Activated CD4-positive, alpha-beta T cell treated with anti-CD3 and anti-CD28 coated beads for 36 hours (primary cell): ENCODE measurements at regions of chr22 and their contacts with region 1.

Region 1: GRCh38 chr22:40950962-40951794 is at the start of gene RBX1:
- DNase-seq: peak; percentile 99
- ATAC-seq: peak; percentile 83
- H3K4me3 Mint-ChIP-seq: peak within 1 kb of the TSS; percentile 100
- H3K27ac Mint-ChIP-seq: peak within 1 kb of the TSS; percentile 100
- H3K4me1 Mint-ChIP-seq: peaks cover 23% of the 10 kb centered on the region
- H3K27me3 Mint-ChIP-seq: no peaks in the 10 kb centered on the region
- total RNA-seq, gene RBX1: 49.9 to 96.6 TPM

Region 2: DNA sequence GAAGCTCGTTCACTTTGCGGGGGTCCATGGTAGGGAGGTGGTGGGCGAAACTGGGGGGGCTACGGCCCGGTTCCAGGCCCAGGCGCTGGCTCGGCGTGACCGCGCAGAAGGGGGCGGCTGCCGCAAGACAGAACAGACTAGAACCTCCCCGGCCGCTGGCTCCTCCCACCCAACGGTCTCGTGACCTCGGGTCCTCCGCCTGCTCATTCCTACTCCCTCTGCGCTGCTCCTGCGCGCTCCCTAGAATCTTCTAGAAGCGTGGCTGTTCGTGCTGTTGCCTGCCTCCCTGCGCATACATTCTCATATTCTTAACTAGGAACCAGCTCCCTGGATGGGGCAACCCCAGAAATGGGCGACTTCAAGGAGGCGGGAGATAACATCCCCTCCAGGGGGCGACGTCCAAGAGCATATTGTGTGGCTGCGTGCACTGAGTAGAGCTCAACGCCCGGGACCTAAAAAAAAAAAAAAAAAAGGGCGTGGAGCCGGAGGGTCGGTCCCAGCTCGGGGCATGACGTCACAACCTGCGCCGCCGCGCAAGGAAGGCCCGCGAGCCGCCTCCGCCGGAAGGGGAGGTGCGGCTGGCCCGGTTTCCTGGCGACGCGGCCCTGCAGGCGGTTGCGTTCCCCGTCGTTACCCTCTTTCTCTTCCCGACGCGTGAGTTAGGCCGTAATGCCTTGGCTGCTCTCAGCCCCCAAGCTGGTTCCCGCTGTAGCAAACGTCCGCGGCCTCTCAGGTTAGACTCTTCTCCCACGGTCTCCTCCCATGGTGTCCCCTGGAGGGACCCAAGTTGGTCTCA is 94.5 kb before region 1 on chr22 and contains the starts of genes ST13 and XPNPEP3:
- CTCF ChIA-PET with region 1: interaction called, 3 read pairs
- POLR2A ChIA-PET with region 1: no interaction called
- intact Hi-C with region 1: loop called (anchors 1 to 2 kb)
- DNase-seq: peak; percentile 98
- ATAC-seq: peak; percentile 96
- H3K4me3 Mint-ChIP-seq: peak within 1 kb of the TSS; percentile 97
- H3K27ac Mint-ChIP-seq: peak within 1 kb of the TSS; percentile 99
- H3K4me1 Mint-ChIP-seq: peaks cover 53% of the 10 kb centered on the region
- H3K27me3 Mint-ChIP-seq: no peaks in the 10 kb centered on the region
- total RNA-seq, gene ST13: 260 to 297 TPM
- total RNA-seq, gene XPNPEP3: 21.5 to 25.8 TPM

Region 3: GRCh38 chr22:41091132-41092022 is 140.2 kb after region 1 on chr22:
- CTCF ChIA-PET with region 1: interaction called, 4 read pairs
- POLR2A ChIA-PET with region 1: interaction called, 23 read pairs
- intact Hi-C with region 1: loop called (anchors 1 kb)
- DNase-seq: peak; percentile 100
- ATAC-seq: peak; percentile 90
- H3K4me3 Mint-ChIP-seq: peak overlapping the region; percentile 97
- H3K27ac Mint-ChIP-seq: peak overlapping the region; percentile 99
- H3K4me1 Mint-ChIP-seq: peaks cover 25% of the 10 kb centered on the region
- H3K27me3 Mint-ChIP-seq: no peaks in the 10 kb centered on the region

Region 4: DNA sequence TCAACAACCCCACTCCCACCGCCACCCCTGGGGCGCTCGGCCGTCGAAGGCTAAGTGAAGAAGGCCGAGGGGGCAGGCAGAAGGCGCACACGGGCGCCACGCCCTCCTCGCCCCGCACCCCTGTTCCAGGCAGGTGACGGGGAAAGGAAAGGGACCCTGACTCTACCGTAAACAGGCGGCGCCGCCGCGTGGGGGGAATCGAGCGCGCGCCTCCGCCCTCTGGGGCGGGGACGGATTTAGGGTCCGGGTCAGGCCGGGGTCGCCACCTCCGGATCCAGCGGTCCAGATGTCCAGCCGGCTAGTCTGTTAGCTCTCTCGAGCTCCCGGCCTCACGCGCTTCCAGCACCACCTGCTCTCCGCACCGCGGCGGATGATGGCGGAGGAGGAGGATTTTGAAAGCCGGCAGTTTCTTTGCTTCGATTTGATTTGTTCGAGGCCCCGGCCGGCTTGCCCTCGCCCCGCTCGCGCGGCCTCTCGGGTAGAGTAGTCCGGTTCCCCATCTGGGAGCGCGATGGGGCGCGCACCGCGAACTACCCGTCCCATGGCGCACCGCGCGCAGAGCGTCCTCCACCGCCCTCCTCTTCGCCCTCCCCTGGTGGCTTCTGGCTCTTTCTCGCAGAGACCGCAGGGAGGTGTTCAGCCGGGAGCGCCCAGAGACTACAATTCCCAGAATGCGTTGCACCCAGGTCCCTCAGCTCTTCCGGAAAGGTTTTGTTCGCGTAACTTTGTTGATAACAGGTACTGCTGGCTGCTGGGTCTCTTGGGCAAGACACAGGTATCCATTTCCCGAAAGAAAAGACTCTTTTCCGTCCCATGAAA is 334.9 kb after region 1 on chr22 and contains the start of gene RANGAP1:
- CTCF ChIA-PET with region 1: no interaction called
- POLR2A ChIA-PET with region 1: interaction called, 6 read pairs
- intact Hi-C with region 1: loop called (anchors 1 kb)
- DNase-seq: peak; percentile 99
- ATAC-seq: peak; percentile 94
- H3K4me3 Mint-ChIP-seq: peak within 1 kb of the TSS; percentile 88
- H3K27ac Mint-ChIP-seq: peak within 1 kb of the TSS; percentile 97
- H3K4me1 Mint-ChIP-seq: peaks cover 33% of the 10 kb centered on the region
- H3K27me3 Mint-ChIP-seq: no peaks in the 10 kb centered on the region
- total RNA-seq, gene RANGAP1: 140 to 157 TPM

Region 5: GRCh38 chr22:41468381-41469217 is 517.4 kb after region 1 on chr22 and contains the starts of genes ACO2 and PHF5A:
- CTCF ChIA-PET with region 1: interaction called, 3 read pairs
- POLR2A ChIA-PET with region 1: no interaction called
- intact Hi-C with region 1: loop called in 1 of 2 experiments (anchors 1 kb)
- DNase-seq: peak; percentile 98
- ATAC-seq: peak; percentile 94
- H3K4me3 Mint-ChIP-seq: peak within 1 kb of the TSS; percentile 90
- H3K27ac Mint-ChIP-seq: peak within 1 kb of the TSS; percentile 99
- H3K4me1 Mint-ChIP-seq: peaks cover 47% of the 10 kb centered on the region
- H3K27me3 Mint-ChIP-seq: no peaks in the 10 kb centered on the region
- total RNA-seq, gene ACO2: 95.4 to 106 TPM
- total RNA-seq, gene PHF5A: 54.5 to 61.1 TPM

Region 6: DNA sequence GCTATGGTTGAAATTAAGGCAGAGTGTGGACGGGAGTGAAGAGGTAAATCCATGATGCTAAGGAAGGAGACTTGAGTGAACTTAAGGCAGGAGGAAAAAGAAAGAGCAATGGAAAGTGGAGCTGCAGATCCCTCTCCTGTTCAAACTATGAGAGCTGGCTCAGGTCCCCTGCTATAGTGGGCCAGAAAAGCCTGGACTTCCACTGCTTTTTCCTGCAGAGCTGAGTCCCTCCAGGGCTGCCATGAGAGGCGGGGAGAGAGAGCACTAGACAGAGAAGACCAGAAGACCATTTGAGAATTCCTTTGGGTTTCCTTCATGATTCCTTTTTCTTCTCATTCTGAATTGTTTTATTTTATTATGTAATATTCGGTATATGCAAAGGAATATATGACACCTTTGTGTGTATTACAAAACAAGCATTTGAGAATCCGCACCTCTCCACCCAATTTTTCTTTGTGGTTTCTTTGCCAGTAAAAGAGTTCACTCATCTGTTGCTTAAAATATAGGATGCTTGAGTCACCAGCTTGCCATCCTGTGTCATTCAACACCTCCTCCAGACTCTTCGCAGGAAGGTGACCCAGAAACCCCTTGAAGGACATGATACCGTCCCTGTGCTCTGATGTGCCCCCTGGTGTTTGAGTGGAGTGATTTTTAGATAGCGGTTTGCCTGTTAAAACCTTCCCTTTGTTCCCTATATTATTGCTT is 906.1 kb after region 1 on chr22:
- CTCF ChIA-PET with region 1: no interaction called
- POLR2A ChIA-PET with region 1: no interaction called
- intact Hi-C with region 1: loop called in 1 of 2 experiments (anchors 2 kb)
- DNase-seq: peak; percentile 89
- ATAC-seq: peak; percentile 71
- H3K4me3 Mint-ChIP-seq: no peak overlapping the region
- H3K27ac Mint-ChIP-seq: peak overlapping the region; percentile 95
- H3K4me1 Mint-ChIP-seq: peaks cover 76% of the 10 kb centered on the region
- H3K27me3 Mint-ChIP-seq: no peaks in the 10 kb centered on the region